ENCODE measurements at regions of chr17 and their contacts with region 1.

Region 1: GRCh38 chr17:29148790-29149430 is 31.3 kb downstream of the MYO18A start:
- DNase-seq: peak; percentile 95
- H3K4me3 ChIP-seq: peak overlapping the region; percentile 48
- H3K27ac ChIP-seq: peak overlapping the region; percentile 63
- H3K4me1 ChIP-seq: peaks cover 15% of the 10 kb centered on the region
- H3K27me3 ChIP-seq: no peaks in the 10 kb centered on the region
- CTCF ChIP-seq: peak; percentile 99

Region 2: GRCh38 chr17:29124117-29124924 is 24.6 kb before region 1 on chr17:
- CTCF ChIA-PET with region 1: interaction called, 10 read pairs
- POLR2A ChIA-PET with region 1: no interaction called
- intact Hi-C with region 1: no loop called
- DNase-seq: peak; percentile 87
- H3K4me3 ChIP-seq: no peak overlapping the region
- H3K27ac ChIP-seq: no peak overlapping the region
- H3K4me1 ChIP-seq: no peaks in the 10 kb centered on the region
- H3K27me3 ChIP-seq: no peaks in the 10 kb centered on the region
- CTCF ChIP-seq: peak; percentile 75

Region 3: DNA sequence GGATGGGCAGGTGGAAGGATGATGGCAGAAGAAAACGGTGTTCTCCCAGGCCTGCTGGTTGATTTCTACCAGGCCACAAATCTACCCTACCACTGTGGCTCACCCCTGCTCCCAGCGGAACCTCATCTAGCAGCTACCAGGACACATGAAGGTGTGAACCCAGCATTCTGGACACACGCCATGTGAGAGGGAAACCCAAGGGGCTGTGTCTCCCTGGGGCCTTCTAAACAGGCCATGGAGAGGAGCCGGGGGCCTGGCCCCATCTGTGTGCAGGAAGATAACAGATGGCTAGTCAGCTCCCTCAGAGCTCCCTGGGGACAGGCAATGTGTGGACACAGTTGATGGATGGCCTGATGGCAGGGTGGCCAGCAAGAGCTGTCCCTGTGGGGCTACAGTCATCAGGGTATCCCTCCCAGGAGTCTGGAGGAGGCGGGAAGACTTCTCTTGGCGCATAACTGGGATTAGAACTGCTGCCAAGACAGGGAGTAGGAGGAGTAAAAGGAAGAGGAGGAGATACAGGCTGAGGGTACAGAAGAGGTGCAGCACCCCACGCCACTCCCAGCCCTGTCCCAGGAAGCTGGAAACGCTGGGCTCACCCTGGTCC is 13.9 kb after region 1 on chr17:
- CTCF ChIA-PET with region 1: interaction called, 11 read pairs
- POLR2A ChIA-PET with region 1: no interaction called
- intact Hi-C with region 1: no loop called
- DNase-seq: no peak
- H3K4me3 ChIP-seq: no peak overlapping the region
- H3K27ac ChIP-seq: peak overlapping the region; percentile 33
- H3K4me1 ChIP-seq: peaks cover 38% of the 10 kb centered on the region
- H3K27me3 ChIP-seq: no peaks in the 10 kb centered on the region
- CTCF ChIP-seq: no peak

Region 4: GRCh38 chr17:29180034-29180787 is 31.3 kb after region 1 on chr17 and contains the start of gene MYO18A:
- CTCF ChIA-PET with region 1: interaction called, 44 read pairs
- POLR2A ChIA-PET with region 1: no interaction called
- intact Hi-C with region 1: no loop called
- DNase-seq: peak; percentile 85
- H3K4me3 ChIP-seq: peak within 1 kb of the TSS; percentile 63
- H3K27ac ChIP-seq: peak within 1 kb of the TSS; percentile 72
- H3K4me1 ChIP-seq: peaks cover 22% of the 10 kb centered on the region
- H3K27me3 ChIP-seq: no peaks in the 10 kb centered on the region
- CTCF ChIP-seq: peak; percentile 73
- total RNA-seq, gene MYO18A: 26.6 and 36.6 TPM in 2 replicates

Region 5: DNA sequence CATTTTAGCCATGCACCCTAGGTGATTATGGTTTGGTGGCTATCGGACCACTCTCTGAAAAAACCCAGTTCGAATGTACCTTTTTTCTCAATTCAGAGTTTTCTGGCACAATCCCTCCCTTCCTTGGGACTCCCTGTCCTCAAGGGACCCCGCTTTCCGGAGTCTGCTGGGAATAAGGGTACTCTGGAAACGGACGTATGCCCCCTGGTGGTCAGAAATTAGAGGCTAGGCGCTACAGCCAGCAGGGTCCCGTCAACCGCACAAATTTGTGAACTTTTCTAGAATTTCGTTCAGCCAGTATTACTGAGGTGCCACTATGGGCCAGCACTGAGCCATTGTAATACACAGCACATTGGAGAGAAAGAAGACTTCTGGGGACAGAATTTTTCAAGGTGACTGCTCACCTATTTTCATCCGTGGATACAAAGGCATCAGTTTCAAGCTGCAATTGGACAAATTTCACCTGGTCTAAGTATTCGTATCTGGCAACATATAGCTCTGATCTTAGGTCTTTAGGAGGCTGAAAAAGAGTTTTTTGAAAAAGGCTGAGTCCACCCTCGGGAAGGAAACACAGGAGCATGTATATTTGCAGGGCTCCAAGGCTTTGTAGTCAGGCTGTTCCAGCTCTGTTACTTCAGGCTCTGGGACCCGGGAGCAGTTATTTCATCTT is 70.6 kb after region 1 on chr17:
- CTCF ChIA-PET with region 1: interaction called, 27 read pairs
- POLR2A ChIA-PET with region 1: no interaction called
- intact Hi-C with region 1: loop called (anchors 2 kb)
- DNase-seq: peak; percentile 91
- H3K4me3 ChIP-seq: no peak overlapping the region
- H3K27ac ChIP-seq: no peak overlapping the region
- H3K4me1 ChIP-seq: peaks cover 5% of the 10 kb centered on the region
- H3K27me3 ChIP-seq: no peaks in the 10 kb centered on the region
- CTCF ChIP-seq: peak; percentile 96

Region 6: GRCh38 chr17:29241015-29241963 is 92.4 kb after region 1 on chr17:
- CTCF ChIA-PET with region 1: interaction called, 10 read pairs
- POLR2A ChIA-PET with region 1: no interaction called
- intact Hi-C with region 1: no loop called
- DNase-seq: peak; percentile 90
- H3K4me3 ChIP-seq: no peak overlapping the region
- H3K27ac ChIP-seq: no peak overlapping the region
- H3K4me1 ChIP-seq: no peaks in the 10 kb centered on the region
- H3K27me3 ChIP-seq: no peaks in the 10 kb centered on the region
- CTCF ChIP-seq: no peak

Region 7: DNA sequence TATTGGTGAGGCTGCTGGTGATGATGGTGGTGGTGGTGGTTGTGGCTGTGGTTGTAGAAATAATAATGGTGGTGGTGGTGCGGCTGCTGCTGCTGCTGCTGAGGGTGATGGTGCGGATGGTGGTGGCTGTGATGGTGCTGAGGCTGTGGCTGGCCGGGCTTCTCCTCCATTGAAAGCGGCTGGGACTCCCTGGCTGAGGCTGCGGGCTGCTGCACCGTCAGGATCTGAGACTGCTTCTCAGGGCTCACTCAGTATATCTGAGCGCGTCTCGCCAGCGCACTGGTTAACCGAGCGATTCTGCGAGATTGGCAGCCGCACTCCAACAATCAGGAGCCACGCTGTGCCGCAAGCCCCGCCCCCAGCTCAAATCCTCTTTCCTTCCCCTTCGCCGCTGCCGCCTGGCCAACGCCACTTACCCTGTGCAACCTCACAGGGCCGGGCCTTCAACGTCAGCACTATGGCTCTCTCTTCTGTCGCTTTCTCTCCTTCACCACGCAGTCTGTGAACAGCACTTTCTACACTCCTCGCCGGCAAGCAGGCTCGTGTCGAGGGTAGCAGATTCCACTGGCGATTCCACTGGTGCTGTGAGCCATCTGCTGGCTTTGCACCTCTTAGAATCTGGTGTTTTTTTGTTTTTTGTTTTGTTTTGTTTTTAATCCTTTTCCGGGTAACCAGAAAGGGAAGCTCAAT is 145.1 kb after region 1 on chr17 and contains the start of gene NUFIP2:
- CTCF ChIA-PET with region 1: interaction called, 21 read pairs
- POLR2A ChIA-PET with region 1: no interaction called
- intact Hi-C with region 1: loop called (anchors 5 kb)
- DNase-seq: peak; percentile 99
- H3K4me3 ChIP-seq: peak within 1 kb of the TSS; percentile 97
- H3K27ac ChIP-seq: peak within 1 kb of the TSS; percentile 89
- H3K4me1 ChIP-seq: peaks cover 23% of the 10 kb centered on the region
- H3K27me3 ChIP-seq: no peaks in the 10 kb centered on the region
- CTCF ChIP-seq: no peak
- total RNA-seq, gene NUFIP2: 80.4 and 93.4 TPM in 2 replicates

Measured in A673 (cell line).